CD4-positive, alpha-beta memory T cell (primary cell): ENCODE measurements at regions of chr6 and their contacts with region 1.

Region 1: DNA sequence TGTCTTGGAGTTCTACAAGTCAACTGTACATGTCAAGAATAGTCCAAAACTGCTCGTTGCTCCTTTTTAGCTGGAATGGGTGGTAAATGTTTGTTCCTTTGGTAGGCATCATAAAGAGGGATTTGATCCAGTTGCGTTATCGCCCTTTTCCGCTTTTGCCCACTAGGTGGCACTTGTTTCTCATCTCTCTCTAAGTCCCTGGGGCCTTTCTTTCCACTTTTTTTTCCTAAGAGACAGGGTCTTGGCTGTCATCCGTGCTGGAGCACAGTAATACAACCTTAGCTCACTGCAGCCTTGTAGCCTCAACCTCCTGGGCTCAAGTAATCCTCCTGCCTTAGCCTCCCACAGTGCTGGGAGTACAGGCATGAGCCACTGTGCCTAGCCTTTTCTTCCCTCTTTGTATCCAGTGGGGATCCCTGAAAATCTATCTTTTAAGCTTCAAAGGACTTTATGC is 20.7 kb downstream of the GTPBP2 start:
- DNase-seq: peak; percentile 36 to 60 (median 49)
- H3K4me3 ChIP-seq: no peak overlapping the region
- H3K4me3 Mint-ChIP-seq: no peak overlapping the region
- H3K27ac ChIP-seq: no peak overlapping the region
- H3K27ac Mint-ChIP-seq: peak overlapping the region in 6 of 7 donors; percentile 1 to 78 (median 26)
- H3K4me1 ChIP-seq: no peaks in the 10 kb centered on the region
- H3K4me1 Mint-ChIP-seq: peaks cover 3 to 7% (median 6%) of the 10 kb centered on the region in 4 donors
- H3K27me3 ChIP-seq: no peaks in the 10 kb centered on the region
- H3K27me3 Mint-ChIP-seq: no peaks in the 10 kb centered on the region

Region 2: GRCh38 chr6:43593938-43594337 is 14.4 kb before region 1 on chr6:
- CTCF ChIA-PET with region 1: interaction called, 39 read pairs
- POLR2A ChIA-PET with region 1: no interaction called
- intact Hi-C with region 1: no loop called
- DNase-seq: no peak
- H3K4me3 ChIP-seq: no peak overlapping the region
- H3K4me3 Mint-ChIP-seq: no peak overlapping the region
- H3K27ac ChIP-seq: no peak overlapping the region
- H3K27ac Mint-ChIP-seq: no peak overlapping the region
- H3K4me1 ChIP-seq: no peaks in the 10 kb centered on the region
- H3K4me1 Mint-ChIP-seq: peaks cover 0 to 3% (median under 1%) of the 10 kb centered on the region in 4 donors
- H3K27me3 ChIP-seq: no peaks in the 10 kb centered on the region
- H3K27me3 Mint-ChIP-seq: no peaks in the 10 kb centered on the region

Region 3: GRCh38 chr6:43621429-43622180 is 13.3 kb after region 1 on chr6:
- CTCF ChIA-PET with region 1: interaction called, 12 read pairs
- POLR2A ChIA-PET with region 1: no interaction called
- intact Hi-C with region 1: no loop called
- DNase-seq: no peak
- H3K4me3 ChIP-seq: no peak overlapping the region
- H3K4me3 Mint-ChIP-seq: no peak overlapping the region
- H3K27ac ChIP-seq: no peak overlapping the region
- H3K27ac Mint-ChIP-seq: no peak overlapping the region
- H3K4me1 ChIP-seq: peaks cover 4% of the 10 kb centered on the region
- H3K4me1 Mint-ChIP-seq: peaks cover 4 to 9% (median 6%) of the 10 kb centered on the region in 4 donors
- H3K27me3 ChIP-seq: no peaks in the 10 kb centered on the region
- H3K27me3 Mint-ChIP-seq: no peaks in the 10 kb centered on the region